ENCODE measurements at regions of chr1 and their contacts with region 1.

Region 1: GRCh38 chr1:70221241-70222121 is at the start of gene SRSF11:
- DNase-seq: peak; percentile 85
- ATAC-seq: peak; percentile 97
- H3K4me3 ChIP-seq: peak within 1 kb of the TSS; percentile 82 to 97 (median 91)
- H3K27ac ChIP-seq: peak within 1 kb of the TSS; percentile 97
- H3K4me1 ChIP-seq: peaks cover 37% of the 10 kb centered on the region
- H3K27me3 ChIP-seq: no peaks in the 10 kb centered on the region; a peak in 1 of 5 replicates
- CTCF ChIP-seq: no peak
- EP300 ChIP-seq: no peak
- POLR2A ChIP-seq: peak; percentile 69 to 81
- RAD21 ChIP-seq: peak; percentile 36; the same call in 1 of the 2 replicates
- total RNA-seq, gene SRSF11: 104 and 118 TPM in 2 replicates

Region 2: DNA sequence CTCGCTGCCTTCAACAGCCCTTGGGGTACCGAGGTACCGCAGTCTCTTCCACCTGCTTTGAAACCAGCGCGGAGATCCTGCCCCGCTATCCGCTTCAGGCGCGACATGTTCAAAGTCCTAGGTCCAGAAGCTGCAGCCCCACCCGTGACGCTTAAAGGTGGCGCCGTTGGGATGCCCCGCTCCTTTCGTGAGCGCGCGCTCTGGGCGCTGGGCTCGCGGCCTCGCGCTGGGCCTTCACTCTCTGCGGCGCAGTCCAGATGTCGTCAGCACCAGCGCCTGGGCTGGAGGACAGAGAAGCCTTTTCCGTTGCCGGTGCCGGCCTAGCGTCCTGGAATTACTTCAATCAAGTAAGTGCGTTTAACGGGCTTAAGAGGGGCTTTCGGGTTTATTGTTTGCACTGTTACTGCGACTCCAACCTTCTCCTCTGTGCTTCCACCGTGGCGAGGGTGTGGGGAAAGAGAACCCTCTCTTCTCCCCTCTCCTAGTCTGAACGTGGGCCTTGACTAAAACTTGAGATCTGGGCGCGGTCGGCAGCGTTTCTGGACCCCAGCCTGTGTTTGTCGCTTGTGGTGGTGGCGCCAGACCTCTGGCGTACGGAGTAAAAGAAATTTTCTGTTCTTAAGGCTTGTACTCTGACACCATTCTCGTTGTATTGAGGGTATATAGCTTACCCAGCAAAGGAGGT is 15.9 kb before region 1 on chr1 and contains the start of gene LRRC40:
- CTCF ChIA-PET with region 1: no interaction called
- POLR2A ChIA-PET with region 1: interaction called, 41 read pairs
- in situ Hi-C with region 1: no loop called
- intact Hi-C with region 1: loop called (anchors 1 kb)
- DNase-seq: peak; percentile 94
- ATAC-seq: peak; percentile 94
- H3K4me3 ChIP-seq: peak within 1 kb of the TSS; percentile 81 to 98 (median 90)
- H3K27ac ChIP-seq: peak within 1 kb of the TSS; percentile 96
- H3K4me1 ChIP-seq: peaks cover 58% of the 10 kb centered on the region
- H3K27me3 ChIP-seq: no peaks in the 10 kb centered on the region; a peak in 2 of 5 replicates
- CTCF ChIP-seq: no peak
- EP300 ChIP-seq: peak in 1 of 2 experiments; percentile 37; a peak in 2 of 4 replicates
- POLR2A ChIP-seq: peak; percentile 88 to 95
- RAD21 ChIP-seq: peak; percentile 11; the same call in 1 of the 2 replicates
- total RNA-seq, gene LRRC40: 32.7 and 54.1 TPM in 2 replicates

Region 3: GRCh38 chr1:70293186-70293843 is 71.8 kb after region 1 on chr1:
- CTCF ChIA-PET with region 1: no interaction called
- POLR2A ChIA-PET with region 1: no interaction called
- in situ Hi-C with region 1: no loop called
- intact Hi-C with region 1: no loop called
- DNase-seq: no peak
- ATAC-seq: no peak
- H3K4me3 ChIP-seq: no peak overlapping the region
- H3K27ac ChIP-seq: no peak overlapping the region
- H3K4me1 ChIP-seq: no peaks in the 10 kb centered on the region
- H3K27me3 ChIP-seq: no peaks in the 10 kb centered on the region
- CTCF ChIP-seq: no peak
- EP300 ChIP-seq: no peak
- POLR2A ChIP-seq: no peak
- RAD21 ChIP-seq: no peak

Region 4: GRCh38 chr1:70354332-70355110 is 133.0 kb after region 1 on chr1 and contains the start of gene ANKRD13C:
- CTCF ChIA-PET with region 1: no interaction called
- POLR2A ChIA-PET with region 1: interaction called, 10 read pairs
- in situ Hi-C with region 1: no loop called
- intact Hi-C with region 1: no loop called
- DNase-seq: peak; percentile 95
- ATAC-seq: peak; percentile 97
- H3K4me3 ChIP-seq: peak within 1 kb of the TSS; percentile 89 to 94 (median 92)
- H3K27ac ChIP-seq: peak within 1 kb of the TSS; percentile 95
- H3K4me1 ChIP-seq: peaks cover 31% of the 10 kb centered on the region
- H3K27me3 ChIP-seq: no peaks in the 10 kb centered on the region; a peak in 1 of 5 replicates
- CTCF ChIP-seq: peak; percentile 15; the same call in 1 of the 2 replicates
- EP300 ChIP-seq: 0 out of 4 replicates have a peak, but pooled peaks of 1 of the 2 experiments have one; percentile 13
- POLR2A ChIP-seq: peak; percentile 97 to 98
- RAD21 ChIP-seq: peak; percentile 7; the same call in 1 of the 2 replicates
- total RNA-seq, gene ANKRD13C: 17.6 and 18.8 TPM in 2 replicates